ENCODE measurements at regions of chr3 and their contacts with region 1.

Region 1: GRCh38 chr3:16433701-16434151 is 79.8 kb downstream of the RFTN1 start:
- DNase-seq: peak; percentile 95
- H3K4me3 ChIP-seq: peak overlapping the region; percentile 58
- H3K27ac ChIP-seq: peak overlapping the region; percentile 98
- H3K4me1 ChIP-seq: peaks cover 98% of the 10 kb centered on the region
- CTCF ChIP-seq: no peak

Region 2: GRCh38 chr3:16378920-16379319 is 54.8 kb before region 1 on chr3:
- CTCF ChIA-PET with region 1: interaction called, 3 read pairs
- POLR2A ChIA-PET with region 1: interaction called, 13 read pairs
- intact Hi-C with region 1: loop called (anchors 1 kb)
- DNase-seq: no peak
- H3K4me3 ChIP-seq: peak overlapping the region; percentile 4
- H3K27ac ChIP-seq: peak overlapping the region; percentile 99
- H3K4me1 ChIP-seq: peaks cover 96% of the 10 kb centered on the region
- CTCF ChIP-seq: no peak

Region 3: GRCh38 chr3:16415911-16416476 is 17.7 kb before region 1 on chr3:
- CTCF ChIA-PET with region 1: interaction called, 3 read pairs
- POLR2A ChIA-PET with region 1: interaction called, 13 read pairs
- intact Hi-C with region 1: no loop called
- DNase-seq: no peak
- H3K4me3 ChIP-seq: no peak overlapping the region
- H3K27ac ChIP-seq: peak overlapping the region; percentile 47
- H3K4me1 ChIP-seq: peaks cover 91% of the 10 kb centered on the region
- CTCF ChIP-seq: no peak

Region 4: GRCh38 chr3:16482770-16483531 is 49.2 kb after region 1 on chr3:
- CTCF ChIA-PET with region 1: no interaction called
- POLR2A ChIA-PET with region 1: interaction called, 11 read pairs
- intact Hi-C with region 1: loop called (anchors 1 kb)
- DNase-seq: peak; percentile 82
- H3K4me3 ChIP-seq: peak overlapping the region; percentile 50
- H3K27ac ChIP-seq: peak overlapping the region; percentile 77
- H3K4me1 ChIP-seq: peaks cover 74% of the 10 kb centered on the region
- CTCF ChIP-seq: peak; percentile 37; the same call in 1 of the 2 replicates

Region 5: DNA sequence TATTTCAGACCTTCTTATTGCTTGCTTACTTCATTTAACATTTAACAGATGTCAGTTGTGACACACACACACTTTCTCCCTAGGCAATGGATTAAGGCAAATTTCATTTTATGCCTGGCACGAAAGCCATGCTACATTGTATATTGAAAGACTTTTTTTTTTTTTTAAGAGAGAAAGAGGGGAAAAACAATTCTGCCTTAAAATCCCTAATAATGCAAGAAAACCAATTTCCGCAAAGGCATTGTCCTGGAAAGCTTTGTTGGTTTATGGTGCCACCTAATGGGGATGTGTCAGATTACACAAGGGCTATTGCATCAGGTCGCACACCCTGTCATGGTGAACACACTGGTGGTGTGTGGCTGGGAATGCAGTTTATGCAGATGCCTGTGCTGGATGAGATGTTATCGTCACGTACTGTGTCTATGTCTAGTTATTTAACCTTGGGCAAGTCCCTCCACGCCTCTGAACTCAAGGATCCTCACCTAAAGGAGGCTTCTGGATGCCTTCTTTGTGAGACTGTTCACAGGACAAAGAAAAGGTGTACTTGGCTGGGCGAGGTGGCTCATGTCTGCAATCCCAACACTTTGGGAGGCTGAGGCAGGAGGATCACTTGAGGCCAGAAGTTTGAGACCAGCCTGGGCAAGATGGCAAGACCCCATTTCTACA is 117.1 kb after region 1 on chr3:
- CTCF ChIA-PET with region 1: no interaction called
- POLR2A ChIA-PET with region 1: no interaction called
- intact Hi-C with region 1: loop called (anchors 2 kb)
- DNase-seq: peak; percentile 92
- H3K4me3 ChIP-seq: no peak overlapping the region
- H3K27ac ChIP-seq: no peak overlapping the region
- H3K4me1 ChIP-seq: peaks cover 17% of the 10 kb centered on the region
- CTCF ChIP-seq: peak; percentile 97

Region 6: GRCh38 chr3:16589867-16590624 is 156.3 kb after region 1 on chr3:
- CTCF ChIA-PET with region 1: no interaction called
- POLR2A ChIA-PET with region 1: no interaction called
- intact Hi-C with region 1: no loop called
- DNase-seq: peak; percentile 10
- H3K4me3 ChIP-seq: no peak overlapping the region
- H3K27ac ChIP-seq: no peak overlapping the region
- H3K4me1 ChIP-seq: peaks cover 9% of the 10 kb centered on the region
- CTCF ChIP-seq: no peak